Left cardiac atrium (tissue), 4 donors: ENCODE measurements at regions of chr12 and their contacts with region 1.

Region 1: DNA sequence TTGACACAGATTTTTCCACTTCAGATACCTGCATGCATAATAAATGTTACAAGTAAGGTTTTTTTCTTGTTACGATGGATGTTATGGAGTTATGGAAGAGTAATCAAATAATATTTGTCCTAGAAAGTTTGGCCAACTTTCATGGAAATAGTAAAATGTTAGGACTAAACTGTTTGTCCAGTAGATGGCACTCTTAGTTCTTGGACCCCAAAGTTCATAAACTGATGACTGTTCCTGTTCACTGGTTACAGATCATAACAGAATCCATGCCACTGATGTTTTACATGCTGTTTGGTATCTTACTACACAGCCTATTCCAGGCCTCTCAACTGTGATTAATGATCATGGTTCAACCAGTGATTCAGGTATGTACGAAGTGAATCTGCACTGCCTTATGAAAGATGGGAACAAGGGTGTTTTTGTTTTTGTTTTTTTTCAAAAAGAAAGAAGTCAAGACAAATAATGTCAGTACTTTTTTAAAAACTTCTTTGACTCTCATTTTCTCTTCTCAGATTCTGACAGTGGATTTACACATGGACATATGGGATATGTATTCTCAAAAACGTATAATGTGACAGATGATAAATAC is 48.8 kb upstream of the SLCO1C1 start:
- DNase-seq: no peak
- ATAC-seq: peak; percentile 35 to 38

Region 2: DNA sequence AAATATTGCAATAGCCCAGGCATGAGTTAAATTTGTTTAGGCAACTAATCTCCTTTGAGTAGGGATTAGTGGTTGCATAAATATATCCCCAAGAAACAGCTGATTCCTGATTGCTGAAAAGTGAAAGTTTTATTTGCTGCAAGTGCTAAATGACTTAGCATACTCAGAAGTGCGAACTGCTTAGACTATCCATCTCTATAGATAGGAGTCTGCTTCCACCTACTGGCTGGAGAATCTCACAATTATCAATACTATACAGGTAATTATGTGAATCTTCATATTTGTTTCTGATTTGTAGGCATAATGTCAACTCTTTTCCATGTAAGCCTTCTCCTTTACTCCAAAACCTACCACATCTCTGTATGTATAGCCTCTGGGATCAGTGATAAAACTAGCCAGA is 152.2 kb after region 1 on chr12:
- intact Hi-C with region 1: loop called in 1 of 2 experiments (anchors 5 kb)
- DNase-seq: no peak
- ATAC-seq: peak; percentile 66 to 84